Kidney (tissue), 22 donors: ENCODE measurements at regions of chr18 and their contacts with region 1.

Region 1: GRCh38 chr18:74353169-74353775 is 37.6 kb downstream of the C18orf63 start:
- DNase-seq: peak in 4 of 5 donors; percentile 71 to 88 (median 80)
- H3K4me3 ChIP-seq: no peak overlapping the region
- H3K27ac ChIP-seq: no peak overlapping the region
- H3K4me1 ChIP-seq: no peaks in the 10 kb centered on the region
- H3K27me3 ChIP-seq: no peaks in the 10 kb centered on the region
- CTCF ChIP-seq: peak; percentile 93

Region 2: GRCh38 chr18:74412116-74412880 is 59.0 kb after region 1 on chr18:
- intact Hi-C with region 1: no loop called
- DNase-seq: peak in 4 of 5 donors; percentile 84 to 91 (median 88)
- H3K4me3 ChIP-seq: no peak overlapping the region
- H3K27ac ChIP-seq: no peak overlapping the region
- H3K4me1 ChIP-seq: no peaks in the 10 kb centered on the region
- H3K27me3 ChIP-seq: no peaks in the 10 kb centered on the region
- CTCF ChIP-seq: no peak

Region 3: DNA sequence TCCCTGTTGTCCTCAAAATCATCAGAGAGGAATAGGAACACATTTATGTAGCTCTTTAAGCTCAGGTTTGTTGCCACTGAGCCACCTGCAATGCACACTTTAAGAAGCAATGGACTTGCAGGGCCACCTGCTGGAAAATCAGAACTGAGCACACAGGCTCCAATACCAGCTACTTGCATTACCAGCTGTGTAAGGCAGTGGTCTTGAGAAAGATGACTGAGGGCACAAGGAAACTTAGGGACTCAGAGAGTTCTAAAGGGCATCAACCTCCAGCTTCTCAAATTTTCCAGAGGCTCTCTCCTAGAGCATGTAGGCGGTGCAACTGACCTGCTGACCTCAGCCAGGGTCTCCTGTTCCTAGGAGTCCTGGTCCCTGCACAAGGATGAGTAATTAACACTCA is 140.4 kb after region 1 on chr18:
- intact Hi-C with region 1: loop called (anchors 5 kb)
- DNase-seq: peak in 4 of 5 donors; percentile 68 to 80 (median 76)
- H3K4me3 ChIP-seq: no peak overlapping the region
- H3K27ac ChIP-seq: no peak overlapping the region
- H3K4me1 ChIP-seq: peaks cover 4 to 17% (median 13%) of the 10 kb centered on the region in 3 donors
- H3K27me3 ChIP-seq: no peaks in the 10 kb centered on the region
- CTCF ChIP-seq: peak; percentile 86